Activated naive CD4-positive, alpha-beta T cell treated with anti-CD3 and anti-CD28 coated beads for 36 hours (primary cell): ENCODE measurements at regions of chr22 and their contacts with region 1.

Region 1: GRCh38 chr22:39021552-39022250 is 774 bp downstream of the APOBEC3D start:
- DNase-seq: no peak
- H3K4me3 Mint-ChIP-seq: peak overlapping the region; percentile 90
- H3K27ac Mint-ChIP-seq: peak overlapping the region; percentile 96
- H3K4me1 Mint-ChIP-seq: peaks cover 52% of the 10 kb centered on the region
- H3K27me3 Mint-ChIP-seq: no peaks in the 10 kb centered on the region

Region 2: DNA sequence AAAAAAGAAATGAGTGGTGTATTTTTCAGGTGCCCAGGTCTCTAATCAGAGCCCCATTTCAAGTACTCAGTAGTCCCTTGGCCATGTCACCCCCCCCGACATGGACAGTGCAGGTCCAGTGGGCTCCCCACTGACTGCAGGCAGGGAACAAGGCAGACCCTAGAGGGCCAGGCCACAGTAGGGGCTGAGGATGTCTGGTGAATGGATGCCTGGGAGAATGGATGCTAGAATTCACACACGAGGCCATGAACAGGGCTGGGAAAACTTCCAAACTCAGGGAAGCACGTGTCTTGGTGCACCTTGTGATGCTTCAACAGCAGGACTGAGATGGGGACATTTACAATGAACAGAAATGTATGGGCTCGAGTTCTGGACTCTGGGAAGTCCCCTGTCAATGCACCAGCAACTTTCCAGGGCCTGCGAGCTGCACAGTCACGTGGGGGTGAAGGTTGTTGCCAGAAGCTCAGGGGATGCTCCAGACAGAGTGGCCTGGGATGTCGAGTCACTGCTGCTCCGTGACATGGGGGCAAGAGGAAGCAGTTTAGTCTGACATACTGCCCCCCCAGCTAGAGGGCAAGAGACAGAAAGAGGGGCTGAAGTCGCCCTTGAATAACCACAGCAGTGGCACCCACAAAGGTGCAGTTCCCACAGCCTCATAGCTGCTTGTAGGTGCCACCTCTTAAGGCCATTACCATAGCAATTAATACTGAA is 58.5 kb after region 1 on chr22:
- CTCF ChIA-PET with region 1: no interaction called
- intact Hi-C with region 1: loop called (anchors 5 kb)
- DNase-seq: no peak
- H3K4me3 Mint-ChIP-seq: no peak overlapping the region
- H3K27ac Mint-ChIP-seq: no peak overlapping the region
- H3K4me1 Mint-ChIP-seq: peaks cover 29% of the 10 kb centered on the region
- H3K27me3 Mint-ChIP-seq: no peaks in the 10 kb centered on the region

Region 3: GRCh38 chr22:39144101-39144767 is 122.5 kb after region 1 on chr22:
- CTCF ChIA-PET with region 1: no interaction called
- intact Hi-C with region 1: no loop called
- DNase-seq: peak; percentile 74
- H3K4me3 Mint-ChIP-seq: peak overlapping the region; percentile 88
- H3K27ac Mint-ChIP-seq: peak overlapping the region; percentile 85
- H3K4me1 Mint-ChIP-seq: peaks cover 27% of the 10 kb centered on the region
- H3K27me3 Mint-ChIP-seq: no peaks in the 10 kb centered on the region